ENCODE measurements at regions of chr3 and their contacts with region 1.

Region 1: DNA sequence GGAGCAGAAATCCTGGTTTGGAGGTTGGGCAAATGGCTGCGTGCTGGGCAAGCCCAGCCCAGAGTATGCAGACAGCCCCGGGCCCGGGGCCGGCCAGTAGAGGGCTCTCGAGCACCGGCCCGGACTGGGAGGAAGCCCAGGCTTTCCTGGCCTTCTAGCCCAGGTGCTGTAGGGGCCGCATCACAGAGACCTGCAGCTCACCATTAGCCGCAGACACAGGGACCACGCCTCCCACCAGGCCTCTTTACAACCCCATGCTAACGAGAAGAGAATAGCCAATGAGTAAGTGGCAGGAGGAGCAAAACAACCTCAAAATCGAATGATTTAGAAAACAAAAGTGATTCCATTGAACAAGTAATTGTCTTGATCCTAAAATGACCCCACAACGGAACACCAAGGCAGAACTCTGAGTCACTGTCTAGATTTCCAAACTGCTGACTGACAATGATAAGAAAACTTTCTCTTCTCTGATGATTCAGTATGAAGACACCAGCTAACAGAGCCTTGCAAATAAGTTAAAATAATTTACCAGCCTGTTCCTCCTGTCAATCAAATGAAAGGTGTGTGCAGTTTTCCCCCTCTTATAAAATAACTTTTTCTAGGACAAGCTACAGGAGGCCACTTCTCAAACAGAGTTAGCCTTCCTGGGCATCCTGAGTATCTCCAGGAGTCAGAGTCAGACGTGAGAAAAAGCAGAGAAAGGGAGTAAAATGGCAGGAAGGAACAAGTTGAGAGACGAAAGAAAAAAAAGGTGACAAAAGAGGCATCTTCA is 102.2 kb downstream of the DGKG start:
- DNase-seq: peak; percentile 85
- H3K4me3 Mint-ChIP-seq: peak overlapping the region; percentile 24
- H3K27ac Mint-ChIP-seq: peak overlapping the region; percentile 65
- H3K4me1 Mint-ChIP-seq: peaks cover 27% of the 10 kb centered on the region
- H3K27me3 Mint-ChIP-seq: peaks cover 6% of the 10 kb centered on the region

Region 2: GRCh38 chr3:185878920-185879319 is 380.9 kb before region 1 on chr3:
- CTCF ChIA-PET with region 1: no interaction called
- POLR2A ChIA-PET with region 1: no interaction called
- intact Hi-C with region 1: no loop called
- DNase-seq: no peak
- H3K4me3 Mint-ChIP-seq: no peak overlapping the region
- H3K27ac Mint-ChIP-seq: no peak overlapping the region
- H3K4me1 Mint-ChIP-seq: no peaks in the 10 kb centered on the region
- H3K27me3 Mint-ChIP-seq: peaks cover 12% of the 10 kb centered on the region

Region 3: GRCh38 chr3:185976977-185977678 is 282.7 kb before region 1 on chr3:
- CTCF ChIA-PET with region 1: interaction called, 7 read pairs
- POLR2A ChIA-PET with region 1: no interaction called
- intact Hi-C with region 1: loop called (anchors 1 kb)
- DNase-seq: peak; percentile 92
- H3K4me3 Mint-ChIP-seq: no peak overlapping the region
- H3K27ac Mint-ChIP-seq: peak overlapping the region; percentile 23
- H3K4me1 Mint-ChIP-seq: peaks cover 15% of the 10 kb centered on the region
- H3K27me3 Mint-ChIP-seq: no peaks in the 10 kb centered on the region

Region 4: DNA sequence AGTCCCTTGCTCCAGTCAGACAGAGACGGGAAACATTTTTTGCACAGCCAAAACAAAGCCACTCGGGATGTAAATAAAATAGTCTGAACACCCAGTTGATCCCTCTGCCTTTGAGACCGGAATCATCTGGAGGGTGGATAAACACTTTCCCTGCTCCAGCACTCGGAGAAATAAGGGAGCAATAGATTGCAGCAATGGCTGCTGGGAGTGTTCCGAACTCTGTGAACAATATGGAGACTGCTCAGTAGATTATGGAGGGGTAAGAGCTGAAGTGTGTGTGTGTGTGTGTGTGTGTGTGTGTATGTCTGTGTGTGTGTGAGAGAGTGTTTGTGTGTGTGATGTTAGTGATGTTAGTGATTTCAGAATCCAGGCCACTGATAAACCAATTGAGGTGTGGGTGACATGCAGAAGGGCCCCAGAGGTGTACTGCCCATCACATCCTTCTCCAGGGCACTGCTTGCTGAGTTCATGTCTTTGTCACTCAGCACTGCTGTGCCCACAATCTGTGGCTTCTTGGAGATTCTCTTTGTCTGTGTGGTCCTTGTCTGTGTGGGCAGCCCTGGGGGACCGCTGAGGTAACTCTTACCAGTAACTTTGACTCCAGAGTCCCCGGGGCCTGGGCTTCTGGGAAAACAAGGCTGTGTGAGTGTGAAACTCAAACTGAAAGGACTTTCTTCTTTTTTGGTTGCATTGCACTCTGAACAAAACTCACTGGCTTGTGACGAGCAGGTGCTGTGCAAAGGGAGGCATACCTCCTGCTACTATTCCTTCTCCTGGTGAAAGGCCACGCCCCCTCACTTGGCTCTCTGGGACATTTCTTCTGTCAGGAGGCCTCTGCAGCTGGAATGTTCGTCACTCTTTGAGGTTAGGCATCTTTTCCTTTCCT is 261.4 kb after region 1 on chr3:
- CTCF ChIA-PET with region 1: interaction called, 3 read pairs
- POLR2A ChIA-PET with region 1: no interaction called
- intact Hi-C with region 1: loop called (anchors 1 kb)
- DNase-seq: peak; percentile 88
- H3K4me3 Mint-ChIP-seq: peak overlapping the region; percentile 50
- H3K27ac Mint-ChIP-seq: peak overlapping the region; percentile 81
- H3K4me1 Mint-ChIP-seq: peaks cover 62% of the 10 kb centered on the region
- H3K27me3 Mint-ChIP-seq: no peaks in the 10 kb centered on the region